Kidney (tissue), 22 donors: ENCODE measurements at regions of chr12 and their contacts with region 1.

Region 1: GRCh38 chr12:6944381-6945186 is 762 bp downstream of the C12orf57 start:
- DNase-seq: peak; percentile 95 to 98 (median 96)
- H3K4me3 ChIP-seq: peak overlapping the region; percentile 84 to 89 (median 89)
- H3K27ac ChIP-seq: peak overlapping the region; percentile 96 to 97
- H3K4me1 ChIP-seq: peaks cover 0 to 25% (median 23%) of the 10 kb centered on the region in 3 donors
- H3K27me3 ChIP-seq: no peaks in the 10 kb centered on the region
- CTCF ChIP-seq: peak; percentile 96

Region 2: GRCh38 chr12:7092229-7092985 is 147.8 kb after region 1 on chr12 and contains the start of gene C1R:
- intact Hi-C with region 1: loop called (anchors 10 kb)
- DNase-seq: peak; percentile 77 to 96 (median 84)
- H3K4me3 ChIP-seq: peak within 1 kb of the TSS; percentile 38 to 80 (median 63)
- H3K27ac ChIP-seq: peak within 1 kb of the TSS; percentile 20 to 64
- H3K4me1 ChIP-seq: peaks cover 0 to 11% (median 0%) of the 10 kb centered on the region in 3 donors
- H3K27me3 ChIP-seq: no peaks in the 10 kb centered on the region
- CTCF ChIP-seq: peak; percentile 76
- total RNA-seq, gene C1R: 514 TPM